BJ (cell line): ENCODE measurements at regions of chr3 and their contacts with region 1.

Region 1: DNA sequence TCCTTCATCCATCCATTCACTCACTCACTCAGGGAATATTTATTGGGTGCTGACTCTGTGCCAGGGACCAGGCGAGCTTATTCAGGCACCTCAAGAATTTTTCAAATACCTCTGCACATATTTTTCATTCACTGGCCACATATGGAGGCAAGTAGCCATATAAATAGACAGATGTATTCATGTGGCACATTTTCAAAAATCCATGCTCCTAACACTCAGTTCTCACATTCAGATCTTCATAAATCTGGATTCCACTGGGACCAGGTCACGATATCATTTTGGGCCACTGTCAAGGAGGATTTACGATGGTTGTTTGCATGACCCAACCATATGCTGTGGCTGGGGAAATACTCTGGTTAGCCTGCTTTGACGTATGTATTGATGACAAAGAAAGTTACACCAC is 241.8 kb upstream of the LRTM1 start:
- DNase-seq: peak; percentile 100
- H3K4me3 ChIP-seq: no peak overlapping the region
- H3K27me3 ChIP-seq: no peaks in the 10 kb centered on the region
- CTCF ChIP-seq: no peak

Region 2: DNA sequence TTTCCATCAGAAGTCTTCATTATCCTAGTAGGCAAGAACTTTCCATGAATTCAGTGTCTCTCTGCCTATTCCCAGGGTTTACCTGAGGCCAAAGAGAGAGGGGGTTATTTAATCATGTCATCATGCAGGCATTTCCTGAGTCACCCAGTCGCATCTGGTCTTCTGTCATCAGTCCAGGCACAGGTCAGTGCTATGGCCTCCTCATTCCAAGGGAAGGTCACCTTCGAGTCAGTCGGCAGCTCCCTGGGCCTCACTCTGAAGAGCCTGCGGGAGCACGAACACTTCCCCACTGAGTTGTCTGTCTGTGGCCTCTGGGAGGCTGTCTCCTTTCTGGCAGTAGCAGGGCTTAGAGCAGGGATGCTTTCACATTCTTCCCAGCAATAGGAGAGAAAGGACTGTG is 215.6 kb before region 1 on chr3:
- CTCF ChIA-PET with region 1: interaction called, 16 read pairs
- POLR2A ChIA-PET with region 1: interaction called, 3 read pairs
- DNase-seq: peak; percentile 97
- H3K4me3 ChIP-seq: no peak overlapping the region
- H3K27me3 ChIP-seq: no peaks in the 10 kb centered on the region
- CTCF ChIP-seq: peak; percentile 31

Region 3: DNA sequence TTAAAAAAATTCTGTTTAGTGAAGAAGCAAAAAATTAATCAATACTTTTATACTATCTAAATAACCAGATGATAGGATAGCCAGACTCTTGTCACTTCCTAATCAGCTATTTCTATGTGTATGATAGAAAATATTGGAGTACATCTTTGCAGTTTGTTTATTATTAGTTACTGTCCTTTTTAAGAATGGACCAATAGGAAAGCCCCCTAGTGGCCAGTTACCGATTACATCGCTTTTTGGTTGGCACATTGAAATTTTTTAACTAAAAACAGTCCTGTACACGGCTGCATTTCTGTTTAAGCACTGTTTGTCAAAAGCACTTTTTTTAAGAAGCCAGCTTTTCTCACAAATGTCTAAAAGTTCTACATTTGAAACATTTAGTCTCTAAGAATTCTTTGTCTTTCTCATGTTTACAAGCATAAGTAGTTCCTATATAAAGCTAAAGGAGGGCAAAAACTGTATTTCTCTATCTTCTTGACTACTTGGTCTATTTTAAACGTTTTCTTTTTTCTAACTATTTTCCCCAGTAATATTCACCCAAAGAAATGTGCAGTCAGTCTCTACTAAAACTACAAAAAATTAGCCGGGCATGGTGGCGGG is 11.4 kb after region 1 on chr3:
- CTCF ChIA-PET with region 1: interaction called, 29 read pairs
- POLR2A ChIA-PET with region 1: interaction called, 7 read pairs
- DNase-seq: no peak
- H3K4me3 ChIP-seq: no peak overlapping the region
- H3K27me3 ChIP-seq: no peaks in the 10 kb centered on the region
- CTCF ChIP-seq: peak; percentile 67

Region 4: GRCh38 chr3:55330355-55330754 is 160.7 kb after region 1 on chr3:
- CTCF ChIA-PET with region 1: no interaction called
- POLR2A ChIA-PET with region 1: interaction called, 10 read pairs
- DNase-seq: peak; percentile 94
- H3K4me3 ChIP-seq: no peak overlapping the region
- H3K27me3 ChIP-seq: no peaks in the 10 kb centered on the region
- CTCF ChIP-seq: no peak